Posterior cingulate gyrus (tissue), 11 donors: ENCODE measurements at regions of chr6 and their contacts with region 1.

Region 1: GRCh38 chr6:166627033-166627874 is at the start of gene RPS6KA2:
- DNase-seq: peak; percentile 100

Region 2: DNA sequence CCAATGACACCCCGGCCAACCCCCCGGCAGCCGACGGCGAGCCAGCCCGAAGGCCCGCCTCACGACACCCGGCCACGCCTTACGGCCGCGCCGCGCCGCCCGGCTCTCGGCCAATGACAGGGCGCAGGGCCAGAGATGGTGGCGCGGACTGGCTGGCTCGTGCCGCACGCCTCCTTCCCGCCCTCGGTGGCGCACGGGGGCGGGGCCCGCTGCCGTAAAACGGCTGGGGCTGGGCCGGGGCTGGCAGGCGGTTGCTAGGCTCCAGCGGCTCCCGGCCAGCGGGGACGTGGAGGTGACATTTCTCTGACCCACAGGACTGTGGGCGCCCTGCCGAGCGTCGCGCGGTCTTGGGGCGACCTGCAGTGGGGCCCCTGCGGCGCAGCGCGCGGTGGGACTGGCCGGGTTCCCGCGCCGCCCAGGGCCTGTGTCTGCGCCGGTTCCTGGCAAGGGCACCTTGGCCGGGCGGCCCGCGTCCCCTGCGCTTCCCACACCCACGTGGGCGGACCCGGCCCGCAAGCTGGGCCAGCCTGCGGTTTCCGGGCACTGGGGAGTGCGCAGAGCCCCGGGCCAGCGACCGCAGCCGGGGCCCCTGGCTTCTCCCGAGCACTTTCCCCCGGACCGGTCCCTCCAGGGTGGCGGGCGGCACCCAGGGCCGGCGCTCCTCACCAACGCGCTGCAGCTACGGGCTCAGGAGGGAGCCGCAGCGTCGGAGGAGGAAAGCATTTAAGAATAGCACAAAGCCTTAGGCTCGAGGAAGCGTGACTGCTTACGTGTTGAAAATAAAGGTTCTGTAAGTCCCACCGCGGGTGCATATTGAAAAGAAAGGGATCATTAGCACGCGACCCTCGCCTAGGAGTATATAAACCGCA is 244.1 kb before region 1 on chr6 and contains the start of gene MPC1:
- intact Hi-C with region 1: loop called (anchors 5 kb)
- DNase-seq: peak; percentile 92 to 99 (median 96)

Region 3: DNA sequence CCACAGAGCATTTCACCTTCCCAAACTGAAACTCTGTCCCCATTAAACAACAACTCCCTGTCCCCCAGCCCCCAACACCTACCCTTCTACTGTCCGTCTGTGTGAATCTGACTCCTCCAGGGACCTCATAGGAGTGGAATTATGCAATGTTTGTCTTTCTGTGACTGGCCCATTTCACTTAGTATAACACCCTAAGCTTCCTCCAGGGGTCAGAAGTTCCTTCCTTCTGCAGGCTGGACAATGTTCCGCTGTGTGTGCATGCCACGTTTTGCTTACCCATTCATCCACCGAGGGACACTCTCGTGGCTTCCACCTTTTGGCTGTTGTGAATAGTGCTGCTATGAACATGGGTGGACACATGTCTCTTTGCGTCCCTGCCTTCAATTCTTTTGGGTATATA is 206.9 kb before region 1 on chr6:
- intact Hi-C with region 1: loop called (anchors 5 kb)
- DNase-seq: peak in 4 of 10 donors; percentile 26 to 85 (median 58)

Region 4: GRCh38 chr6:166441325-166442078 is 185.8 kb before region 1 on chr6:
- intact Hi-C with region 1: loop called (anchors 10 kb)
- DNase-seq: peak in 5 of 10 donors; percentile 7 to 79 (median 67)